CD8-positive, alpha-beta memory T cell (primary cell): ENCODE measurements at regions of chr6 and their contacts with region 1.

Region 1: DNA sequence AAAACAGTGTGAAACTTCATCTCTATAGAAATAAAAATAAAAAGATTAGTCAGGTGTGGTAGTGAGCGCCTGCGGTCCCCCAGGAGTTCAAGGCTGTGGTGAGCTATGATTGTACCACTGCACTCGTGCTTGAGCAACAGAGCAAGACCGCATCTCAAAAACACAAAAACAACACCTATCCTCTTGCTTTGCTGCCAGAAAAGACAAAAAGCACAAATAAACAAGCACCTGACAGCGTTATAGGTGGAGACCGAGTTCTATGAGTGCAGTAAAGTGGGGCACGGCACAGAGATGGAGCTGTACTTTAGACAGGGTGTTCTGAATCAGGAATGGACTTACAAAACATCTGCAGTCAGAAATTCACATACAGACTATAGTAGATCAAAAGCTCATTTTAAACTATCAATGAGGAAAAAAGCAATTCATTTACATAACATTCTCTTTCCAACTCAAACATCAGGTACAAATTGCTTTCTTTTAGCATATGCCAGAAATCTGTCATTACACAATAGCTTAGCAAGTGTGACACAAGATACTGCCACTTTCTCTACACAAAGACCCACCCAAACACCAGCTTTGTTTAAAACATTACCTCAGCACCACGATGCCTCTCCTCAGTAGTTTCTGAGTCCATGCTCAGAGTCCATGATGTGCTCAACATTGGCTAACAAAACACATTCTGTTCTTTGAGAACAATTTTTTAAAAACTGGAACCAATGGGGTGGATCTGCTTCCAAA is 10.1 kb downstream of the EZR start:
- DNase-seq: peak; percentile 29 to 81 (median 49)
- H3K4me3 ChIP-seq: no peak overlapping the region
- H3K4me3 Mint-ChIP-seq: peak overlapping the region; percentile 54 to 81 (median 67)
- H3K27ac ChIP-seq: peak overlapping the region; percentile 1
- H3K27ac Mint-ChIP-seq: peak overlapping the region; percentile 71 to 96 (median 92)
- H3K4me1 ChIP-seq: peaks cover 94% of the 10 kb centered on the region
- H3K4me1 Mint-ChIP-seq: peaks cover 94 to 100% (median 100%) of the 10 kb centered on the region in 3 donors
- H3K27me3 ChIP-seq: no peaks in the 10 kb centered on the region
- H3K27me3 Mint-ChIP-seq: no peaks in the 10 kb centered on the region

Region 2: GRCh38 chr6:158086504-158087223 is 722.4 kb before region 1 on chr6:
- CTCF ChIA-PET with region 1: no interaction called
- POLR2A ChIA-PET with region 1: no interaction called
- DNase-seq: no peak
- H3K4me3 ChIP-seq: no peak overlapping the region
- H3K4me3 Mint-ChIP-seq: no peak overlapping the region
- H3K27ac ChIP-seq: no peak overlapping the region
- H3K27ac Mint-ChIP-seq: no peak overlapping the region
- H3K4me1 ChIP-seq: no peaks in the 10 kb centered on the region
- H3K4me1 Mint-ChIP-seq: no peaks in the 10 kb centered on the region
- H3K27me3 ChIP-seq: no peaks in the 10 kb centered on the region
- H3K27me3 Mint-ChIP-seq: no peaks in the 10 kb centered on the region

Region 3: GRCh38 chr6:158819213-158819909 is 10.3 kb after region 1 on chr6 and contains the start of gene EZR:
- CTCF ChIA-PET with region 1: interaction called, 8 read pairs
- POLR2A ChIA-PET with region 1: interaction called, 17 read pairs
- DNase-seq: peak; percentile 82 to 93 (median 84)
- H3K4me3 ChIP-seq: peak within 1 kb of the TSS; percentile 39
- H3K4me3 Mint-ChIP-seq: peak within 1 kb of the TSS; percentile 79 to 100 (median 99)
- H3K27ac ChIP-seq: peak within 1 kb of the TSS; percentile 99
- H3K27ac Mint-ChIP-seq: peak within 1 kb of the TSS; percentile 88 to 99 (median 93)
- H3K4me1 ChIP-seq: peaks cover 36% of the 10 kb centered on the region
- H3K4me1 Mint-ChIP-seq: peaks cover 40 to 52% (median 46%) of the 10 kb centered on the region in 3 donors
- H3K27me3 ChIP-seq: no peaks in the 10 kb centered on the region
- H3K27me3 Mint-ChIP-seq: peaks cover 0 to 3% of the 10 kb centered on the region in 2 donors
- total RNA-seq, gene EZR: 296 to 299 TPM

Region 4: GRCh38 chr6:158853072-158853871 is 44.2 kb after region 1 on chr6:
- CTCF ChIA-PET with region 1: interaction called, 5 read pairs
- POLR2A ChIA-PET with region 1: interaction called, 16 read pairs
- DNase-seq: peak; percentile 81 to 96 (median 86)
- H3K4me3 ChIP-seq: peak overlapping the region; percentile 68
- H3K4me3 Mint-ChIP-seq: no peak overlapping the region
- H3K27ac ChIP-seq: peak overlapping the region; percentile 95
- H3K27ac Mint-ChIP-seq: no peak overlapping the region
- H3K4me1 ChIP-seq: peaks cover 64% of the 10 kb centered on the region
- H3K4me1 Mint-ChIP-seq: peaks cover 9 to 39% (median 36%) of the 10 kb centered on the region in 3 donors
- H3K27me3 ChIP-seq: no peaks in the 10 kb centered on the region
- H3K27me3 Mint-ChIP-seq: peaks cover 0 to 1% of the 10 kb centered on the region in 2 donors